Activated CD8-positive, alpha-beta memory T cell treated with anti-CD3 and anti-CD28 coated beads, Interleukin-2, amount 10 ng/mL, durations not matched to agents 7 days and 5 days (primary cell): ENCODE measurements at regions of chr19 and their contacts with region 1.

Region 1: DNA sequence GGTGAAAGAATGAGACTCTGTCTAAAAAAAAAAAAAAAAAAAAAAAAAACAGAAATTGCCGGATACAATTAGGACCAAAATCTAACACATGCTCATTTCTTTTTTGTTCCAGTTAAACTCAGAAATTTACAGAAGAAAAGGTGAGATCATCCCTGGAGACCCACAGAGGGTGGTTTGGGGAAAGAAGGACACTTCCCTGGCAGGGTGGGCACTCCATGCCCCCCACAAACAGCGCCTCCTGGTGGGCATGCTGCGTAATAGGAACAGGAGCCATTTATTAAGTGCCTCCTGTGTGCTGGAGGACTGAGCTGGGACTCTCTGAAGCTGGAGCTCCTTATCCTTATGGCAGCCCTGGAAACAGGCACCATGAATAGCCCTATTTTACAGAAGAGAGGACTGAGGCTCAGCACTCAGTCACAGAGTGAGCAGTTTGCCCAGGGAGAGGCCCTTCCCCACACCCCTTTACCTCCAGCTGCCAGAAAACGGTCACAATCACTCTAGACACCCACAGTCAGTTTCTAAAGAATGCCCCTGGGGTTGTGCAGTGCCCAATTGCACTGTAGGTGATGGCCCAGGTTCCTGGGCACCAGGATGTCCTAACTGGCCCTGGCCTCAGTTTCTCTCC is 10.1 kb downstream of the C19orf38 start:
- DNase-seq: peak; percentile 65
- ATAC-seq: peak; percentile 73
- H3K4me3 Mint-ChIP-seq: no peak overlapping the region
- H3K27ac Mint-ChIP-seq: no peak overlapping the region
- H3K4me1 Mint-ChIP-seq: peaks cover 6% of the 10 kb centered on the region
- H3K27me3 Mint-ChIP-seq: no peaks in the 10 kb centered on the region

Region 2: DNA sequence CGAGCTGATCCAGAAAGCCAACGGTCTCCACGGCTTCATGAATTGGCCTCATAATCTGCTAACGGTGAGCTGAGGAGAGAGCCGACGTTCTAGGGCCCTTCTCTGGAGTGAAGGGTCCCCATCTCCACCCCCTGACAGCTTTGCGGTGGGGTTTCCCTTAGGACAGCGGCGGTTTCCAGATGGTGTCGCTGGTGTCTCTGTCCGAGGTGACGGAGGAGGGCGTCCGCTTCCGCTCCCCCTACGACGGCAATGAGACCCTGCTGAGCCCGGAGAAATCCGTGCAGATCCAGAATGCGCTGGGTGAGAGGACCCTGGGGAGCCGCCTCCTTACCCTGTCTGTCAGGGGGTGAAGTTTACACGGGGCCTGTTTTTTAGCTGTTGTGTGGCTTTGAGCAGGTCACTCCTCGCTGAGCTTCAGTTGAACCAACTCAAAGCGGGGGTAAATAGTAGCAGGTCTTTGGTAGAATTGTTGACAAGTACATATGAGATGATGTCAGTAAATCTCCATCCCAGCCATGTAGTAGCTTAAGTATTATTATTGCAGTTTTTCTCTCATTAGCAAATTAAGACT is 156.3 kb before region 1 on chr19:
- CTCF ChIA-PET with region 1: interaction called, 46 read pairs
- DNase-seq: peak; percentile 62
- ATAC-seq: peak; percentile 35
- H3K4me3 Mint-ChIP-seq: peak overlapping the region; percentile 79
- H3K27ac Mint-ChIP-seq: peak overlapping the region; percentile 78
- H3K4me1 Mint-ChIP-seq: peaks cover 13% of the 10 kb centered on the region
- H3K27me3 Mint-ChIP-seq: peaks cover 7% of the 10 kb centered on the region

Region 3: DNA sequence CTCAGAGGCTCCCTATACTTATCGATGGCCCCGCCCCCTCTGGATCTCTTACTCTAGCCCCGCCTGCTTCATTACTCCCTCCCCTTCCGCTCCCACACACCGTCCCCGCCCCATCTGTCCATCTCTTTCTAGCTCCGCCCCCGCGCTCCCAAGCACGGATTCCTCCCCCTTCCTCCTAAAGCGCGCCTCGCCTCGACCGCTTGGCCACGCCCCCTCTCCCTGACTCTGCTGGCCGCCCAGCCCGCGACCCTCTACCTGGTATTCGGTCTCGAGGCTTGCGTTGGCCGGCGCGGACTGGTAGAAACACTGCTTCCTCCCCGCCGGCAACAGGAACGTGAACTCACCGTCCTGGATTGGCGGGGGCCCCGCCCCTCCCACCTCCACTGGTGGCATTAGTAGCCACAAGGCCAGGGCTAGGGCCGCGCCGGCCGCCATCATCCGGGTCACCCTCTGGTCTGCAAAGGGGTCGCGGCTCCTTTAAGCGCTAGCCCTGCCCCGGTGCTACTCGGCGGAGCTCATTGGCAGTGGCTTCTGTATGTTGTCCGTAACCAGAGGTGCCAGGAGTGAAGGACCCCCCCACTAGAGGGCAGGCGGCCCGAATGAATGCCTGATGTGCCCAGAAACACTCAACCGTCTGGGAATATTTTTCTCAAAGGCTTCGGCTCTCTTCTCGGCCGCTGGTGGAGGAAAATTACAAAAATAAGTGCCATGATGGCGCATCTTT is 22.4 kb before region 1 on chr19 and contains the start of gene TMED1:
- CTCF ChIA-PET with region 1: interaction called, 50 read pairs
- DNase-seq: peak; percentile 99
- ATAC-seq: peak; percentile 92
- H3K4me3 Mint-ChIP-seq: peak within 1 kb of the TSS; percentile 88
- H3K27ac Mint-ChIP-seq: peak within 1 kb of the TSS; percentile 96
- H3K4me1 Mint-ChIP-seq: peaks cover 18% of the 10 kb centered on the region
- H3K27me3 Mint-ChIP-seq: no peaks in the 10 kb centered on the region
- total RNA-seq, gene TMED1: 16.0 to 19.2 TPM

Region 4: GRCh38 chr19:10870955-10871603 is 12.8 kb after region 1 on chr19 and contains the start of gene CARM1:
- CTCF ChIA-PET with region 1: interaction called, 60 read pairs
- DNase-seq: peak; percentile 99
- ATAC-seq: peak; percentile 89
- H3K4me3 Mint-ChIP-seq: peak within 1 kb of the TSS; percentile 79
- H3K27ac Mint-ChIP-seq: peak within 1 kb of the TSS; percentile 84
- H3K4me1 Mint-ChIP-seq: peaks cover 29% of the 10 kb centered on the region
- H3K27me3 Mint-ChIP-seq: no peaks in the 10 kb centered on the region
- total RNA-seq, gene CARM1: 38.5 to 48.1 TPM

Region 5: DNA sequence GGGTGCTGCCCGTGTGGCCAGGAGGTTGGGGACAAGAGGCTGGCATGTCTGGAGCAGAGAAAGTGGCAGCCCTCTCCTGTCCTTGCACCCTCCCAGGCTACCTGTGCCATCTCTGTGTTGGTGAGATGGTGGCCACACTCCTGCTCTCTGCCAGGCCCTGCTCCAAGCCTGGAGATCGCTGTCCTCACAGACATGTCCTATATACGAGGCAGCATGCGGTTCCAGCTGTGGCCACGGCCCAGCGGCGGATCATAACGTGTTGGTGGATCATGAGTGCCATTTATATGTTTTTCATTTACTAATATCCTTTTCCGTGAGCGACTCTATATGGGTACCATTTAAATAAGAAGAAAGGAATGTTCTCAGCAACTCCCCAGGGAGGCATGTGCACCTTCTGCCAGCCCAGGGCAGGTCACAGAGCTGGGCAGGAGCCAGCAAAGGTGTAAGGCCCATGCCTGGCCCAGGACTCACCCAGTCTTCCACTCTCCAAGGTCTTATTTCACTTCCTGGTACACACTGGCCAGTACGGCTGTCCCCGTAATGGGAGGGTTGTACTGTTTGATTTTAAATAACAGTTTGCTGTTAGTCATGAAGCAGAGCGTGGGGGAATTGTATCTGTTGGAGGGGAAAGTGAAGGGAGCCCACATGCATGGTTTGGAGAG is 183.8 kb after region 1 on chr19:
- CTCF ChIA-PET with region 1: no interaction called
- DNase-seq: no peak
- ATAC-seq: no peak
- H3K4me3 Mint-ChIP-seq: no peak overlapping the region
- H3K27ac Mint-ChIP-seq: peak overlapping the region; percentile 0
- H3K4me1 Mint-ChIP-seq: peaks cover 9% of the 10 kb centered on the region
- H3K27me3 Mint-ChIP-seq: no peaks in the 10 kb centered on the region